GM23248 (cell line): ENCODE measurements at regions of chr1 and their contacts with region 1.

Region 1: GRCh38 chr1:77156214-77156613 is 63.0 kb downstream of the PIGK start:
- DNase-seq: no peak
- H3K4me3 ChIP-seq: no peak overlapping the region
- H3K27ac ChIP-seq: no peak overlapping the region
- H3K4me1 ChIP-seq: no peaks in the 10 kb centered on the region
- H3K27me3 ChIP-seq: no peaks in the 10 kb centered on the region

Region 2: GRCh38 chr1:76961181-76961819 is 194.9 kb before region 1 on chr1:
- in situ Hi-C with region 1: no loop called
- DNase-seq: peak; percentile 87
- H3K4me3 ChIP-seq: no peak overlapping the region
- H3K27ac ChIP-seq: peak overlapping the region; percentile 48
- H3K4me1 ChIP-seq: peaks cover 31% of the 10 kb centered on the region
- H3K27me3 ChIP-seq: no peaks in the 10 kb centered on the region

Region 3: DNA sequence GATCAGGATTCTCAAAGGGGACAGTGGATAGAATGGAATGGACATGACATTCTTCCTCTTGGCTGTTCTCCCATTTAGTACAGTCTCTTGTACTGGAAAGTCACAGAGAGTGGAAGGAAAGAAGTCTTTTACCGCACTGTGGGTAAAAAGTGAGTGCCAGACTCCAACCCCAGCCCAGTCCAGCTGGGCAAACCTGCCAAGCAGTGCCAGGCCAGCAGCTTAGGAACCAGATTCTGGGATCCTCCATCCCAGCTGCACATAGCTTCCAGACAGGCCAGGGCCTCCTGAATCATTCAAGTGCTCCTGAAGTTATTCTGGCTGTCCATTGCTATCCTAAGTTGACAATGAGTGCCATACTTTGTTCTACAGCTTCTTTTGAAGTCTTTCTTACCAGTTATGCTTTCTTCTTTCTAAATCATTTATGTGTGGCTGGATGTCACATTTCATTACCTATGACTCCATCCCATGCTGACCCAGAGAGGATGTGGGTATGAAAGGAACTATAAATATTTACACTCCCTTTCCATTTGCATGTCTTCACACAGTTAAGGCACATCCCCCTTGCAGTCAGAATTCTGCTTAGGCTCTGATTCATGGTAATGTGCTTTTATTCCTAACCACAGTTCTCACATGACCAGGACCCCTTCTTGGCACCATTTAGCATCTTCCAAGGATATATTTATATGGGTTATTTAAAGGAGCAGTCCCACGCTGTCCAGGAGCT is 214.5 kb after region 1 on chr1:
- in situ Hi-C with region 1: no loop called
- DNase-seq: peak; percentile 73
- H3K4me3 ChIP-seq: no peak overlapping the region
- H3K27ac ChIP-seq: peak overlapping the region; percentile 57
- H3K4me1 ChIP-seq: peaks cover 28% of the 10 kb centered on the region
- H3K27me3 ChIP-seq: no peaks in the 10 kb centered on the region

Region 4: DNA sequence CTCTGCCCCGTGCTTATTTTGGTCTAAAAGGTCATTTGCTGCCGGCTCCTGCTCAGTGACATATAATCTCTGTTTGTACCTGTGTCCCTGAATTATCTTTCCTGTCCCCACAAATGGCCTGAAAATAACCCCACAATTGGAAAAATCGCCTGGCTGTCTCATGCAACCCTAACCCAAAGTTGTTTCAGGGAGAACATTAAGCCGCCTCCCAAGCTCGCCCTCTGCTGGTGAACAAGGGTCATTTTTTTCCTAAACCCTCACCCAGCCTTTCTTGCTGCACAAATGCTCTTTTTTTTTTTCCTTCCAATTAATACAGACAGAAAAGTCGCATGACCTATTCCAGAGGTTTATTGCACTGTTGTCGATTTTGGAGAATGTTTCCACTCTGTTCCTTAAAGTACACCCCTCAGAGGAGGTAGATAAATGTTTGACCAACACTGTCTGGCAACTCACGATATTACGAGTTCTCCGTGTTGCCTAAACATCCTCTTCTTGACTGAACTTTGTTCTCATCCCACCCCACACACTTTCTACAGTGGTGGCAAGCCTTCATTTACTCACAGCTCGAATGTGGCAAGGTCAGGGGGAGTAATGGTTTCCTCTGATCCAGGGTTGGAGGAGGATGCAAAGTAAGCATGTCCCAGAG is 377.6 kb after region 1 on chr1:
- in situ Hi-C with region 1: loop called (anchors 10 kb)
- DNase-seq: peak; percentile 79
- H3K4me3 ChIP-seq: no peak overlapping the region
- H3K27ac ChIP-seq: peak overlapping the region; percentile 58
- H3K4me1 ChIP-seq: peaks cover 56% of the 10 kb centered on the region
- H3K27me3 ChIP-seq: no peaks in the 10 kb centered on the region